Activated CD4-positive, alpha-beta memory T cell treated with anti-CD3 and anti-CD28 coated beads for 36 hours (primary cell): ENCODE measurements at regions of chr17 and their contacts with region 1.

Region 1: DNA sequence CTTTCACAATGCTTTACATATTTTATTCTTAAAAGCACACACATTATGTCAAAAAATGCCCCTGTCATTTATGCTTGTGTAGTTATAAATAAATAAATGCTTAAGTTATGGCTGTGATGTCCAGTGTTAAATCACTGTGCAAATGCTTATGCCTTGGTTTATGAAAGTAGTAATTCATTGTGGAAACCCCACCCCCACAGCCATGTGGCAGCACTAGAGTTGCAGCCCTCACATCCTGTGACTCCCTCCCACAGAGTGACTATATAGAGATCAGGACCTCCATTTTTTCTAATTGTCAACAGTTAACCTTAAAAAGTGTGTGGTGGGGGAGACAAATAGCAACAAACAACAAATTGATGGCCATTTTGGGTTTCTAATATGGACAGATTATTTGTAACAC is 2.4 kb downstream of the SKAP1 start:
- DNase-seq: peak; percentile 81
- H3K4me3 Mint-ChIP-seq: peak overlapping the region; percentile 99
- H3K27ac Mint-ChIP-seq: peak overlapping the region; percentile 98
- H3K4me1 Mint-ChIP-seq: peaks cover 67% of the 10 kb centered on the region
- H3K27me3 Mint-ChIP-seq: no peaks in the 10 kb centered on the region

Region 2: DNA sequence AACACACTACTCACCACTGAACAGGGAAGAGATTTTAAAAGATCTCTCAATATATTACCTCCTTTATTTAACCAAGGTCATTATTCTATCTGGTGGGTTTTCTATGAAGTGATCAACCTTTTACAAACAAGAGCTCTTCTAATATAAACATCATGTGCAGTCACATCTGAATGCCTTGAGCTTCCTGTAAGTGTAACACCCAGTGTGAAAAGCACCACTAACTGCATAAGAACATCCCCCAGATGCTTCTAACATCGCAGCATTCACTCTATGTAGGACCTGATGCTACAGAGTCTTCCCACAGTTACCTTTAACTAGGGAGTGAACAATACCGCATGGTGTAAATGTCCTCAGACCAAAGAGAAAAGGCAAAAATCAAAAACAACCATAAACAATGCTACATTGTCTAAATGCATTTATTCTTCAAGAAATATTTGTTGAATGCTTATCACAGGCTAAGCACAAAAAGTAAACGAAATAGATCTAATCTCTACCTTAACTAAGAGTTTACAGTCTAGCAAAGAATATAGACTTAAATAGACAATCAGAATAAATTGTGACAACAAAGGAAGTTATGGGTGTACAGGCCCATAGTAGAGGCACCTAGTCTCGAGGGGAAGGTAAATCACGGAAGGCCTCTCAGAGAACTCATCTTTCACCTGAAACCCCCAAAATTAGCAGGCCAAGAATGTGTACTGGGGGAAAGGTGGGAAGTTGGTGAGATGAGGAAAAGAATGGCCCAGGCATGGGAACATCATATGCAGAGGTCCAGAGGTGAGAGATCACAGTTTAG is 13.8 kb before region 1 on chr17:
- CTCF ChIA-PET with region 1: interaction called, 3 read pairs
- POLR2A ChIA-PET with region 1: interaction called, 3 read pairs
- intact Hi-C with region 1: loop called (anchors 1 kb)
- DNase-seq: no peak
- H3K4me3 Mint-ChIP-seq: peak overlapping the region; percentile 18
- H3K27ac Mint-ChIP-seq: peak overlapping the region; percentile 91
- H3K4me1 Mint-ChIP-seq: peaks cover 91% of the 10 kb centered on the region
- H3K27me3 Mint-ChIP-seq: no peaks in the 10 kb centered on the region